ENCODE measurements at regions of chr5 and their contacts with region 1.

Region 1: DNA sequence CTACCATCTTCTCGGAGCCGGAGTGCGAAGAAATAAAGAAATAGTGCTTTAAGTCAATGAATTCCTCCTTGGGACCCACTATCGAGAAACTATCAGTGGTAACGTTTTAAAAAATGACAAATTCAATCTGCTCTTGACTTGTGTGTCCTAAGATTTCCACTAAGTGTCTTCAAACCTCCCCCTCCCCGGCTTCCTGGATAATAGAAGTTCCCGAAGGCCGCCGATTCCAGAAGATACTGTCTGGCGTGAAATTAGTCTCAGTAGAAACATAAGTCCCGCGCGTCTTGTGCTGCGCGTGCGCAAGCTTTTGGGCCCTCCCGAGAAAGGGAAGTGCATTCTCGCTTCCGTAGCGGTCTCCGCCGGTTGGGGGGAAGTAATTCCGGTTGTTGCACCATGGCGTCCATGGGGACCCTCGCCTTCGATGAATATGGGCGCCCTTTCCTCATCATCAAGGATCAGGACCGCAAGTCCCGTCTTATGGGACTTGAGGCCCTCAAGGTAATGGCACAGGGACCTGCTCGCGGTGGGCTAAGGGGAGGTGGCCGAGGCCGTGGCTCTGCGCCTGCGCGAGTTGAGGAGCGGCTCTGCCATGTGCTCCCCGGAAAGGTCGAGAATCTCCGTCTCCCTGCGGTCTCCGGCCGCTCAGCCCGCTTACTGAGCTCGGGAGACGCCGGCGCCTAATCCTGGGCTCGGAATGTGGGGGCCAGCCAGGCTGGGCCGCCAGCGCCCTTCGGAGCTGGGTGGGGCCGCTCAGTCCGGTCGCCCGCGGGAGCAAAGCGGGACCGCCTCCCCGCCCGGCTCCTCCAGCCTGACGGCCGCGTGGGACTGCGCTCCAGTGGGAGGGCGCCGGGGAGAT is at the start of gene CCT5:
- DNase-seq: peak; percentile 94
- ATAC-seq: peak; percentile 82
- H3K4me3 Mint-ChIP-seq: peak within 1 kb of the TSS; percentile 84
- H3K27ac Mint-ChIP-seq: peak within 1 kb of the TSS; percentile 99
- H3K4me1 Mint-ChIP-seq: peaks cover 51% of the 10 kb centered on the region
- H3K27me3 Mint-ChIP-seq: no peaks in the 10 kb centered on the region
- total RNA-seq, gene CCT5: 319 to 322 TPM

Region 2: GRCh38 chr5:10030210-10030831 is 219.9 kb before region 1 on chr5:
- CTCF ChIA-PET with region 1: no interaction called
- POLR2A ChIA-PET with region 1: no interaction called
- DNase-seq: no peak
- ATAC-seq: no peak
- H3K4me3 Mint-ChIP-seq: no peak overlapping the region
- H3K27ac Mint-ChIP-seq: no peak overlapping the region
- H3K4me1 Mint-ChIP-seq: no peaks in the 10 kb centered on the region
- H3K27me3 Mint-ChIP-seq: no peaks in the 10 kb centered on the region

Region 3: GRCh38 chr5:10158886-10159285 is 91.3 kb before region 1 on chr5:
- CTCF ChIA-PET with region 1: no interaction called
- POLR2A ChIA-PET with region 1: no interaction called
- DNase-seq: no peak
- ATAC-seq: no peak
- H3K4me3 Mint-ChIP-seq: no peak overlapping the region
- H3K27ac Mint-ChIP-seq: no peak overlapping the region
- H3K4me1 Mint-ChIP-seq: no peaks in the 10 kb centered on the region
- H3K27me3 Mint-ChIP-seq: no peaks in the 10 kb centered on the region

Region 4: DNA sequence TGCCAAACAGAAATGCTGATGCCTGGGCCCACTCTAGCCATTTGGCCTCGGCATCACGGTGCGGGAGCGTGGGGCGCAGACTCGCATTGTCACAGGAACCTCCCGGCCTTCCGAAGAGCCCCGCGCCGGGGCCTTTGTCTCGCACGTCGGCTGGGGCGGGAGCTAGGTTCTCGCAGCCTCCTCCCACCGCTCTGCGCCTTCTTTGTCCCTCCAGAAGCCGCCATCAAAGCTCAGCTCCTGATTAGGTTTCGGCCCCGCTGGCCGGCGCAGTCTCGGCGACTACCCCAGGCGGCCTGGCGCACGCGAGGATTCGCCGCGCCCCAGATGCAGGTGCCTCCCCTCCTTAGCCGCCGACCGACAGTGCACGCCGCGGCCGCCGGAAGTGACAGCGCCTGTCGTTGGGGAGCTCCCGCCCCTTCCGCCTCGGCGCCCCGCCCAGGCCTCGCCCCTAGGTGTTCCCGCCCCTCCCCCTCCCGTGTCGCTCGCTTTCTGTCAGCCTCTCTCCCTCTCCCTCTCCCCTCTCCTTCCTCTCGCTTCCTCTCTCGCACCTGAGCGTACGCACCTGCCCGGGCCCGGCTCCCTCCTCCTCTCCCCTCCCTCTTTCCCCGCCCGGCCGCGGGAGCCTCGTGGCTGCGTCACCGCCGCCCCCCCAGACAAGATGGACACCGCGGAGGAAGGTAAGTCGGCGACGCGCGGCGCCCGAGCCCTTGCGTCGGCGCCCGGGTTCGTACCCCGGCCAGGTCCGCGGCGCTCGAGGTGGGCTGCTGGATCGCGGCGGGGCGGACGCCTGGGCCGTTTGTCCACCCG is 103.3 kb after region 1 on chr5 and contains the start of gene MARCHF6:
- CTCF ChIA-PET with region 1: interaction called, 3 read pairs
- POLR2A ChIA-PET with region 1: interaction called, 17 read pairs
- DNase-seq: peak; percentile 96
- ATAC-seq: peak; percentile 92
- H3K4me3 Mint-ChIP-seq: peak within 1 kb of the TSS; percentile 99
- H3K27ac Mint-ChIP-seq: peak within 1 kb of the TSS; percentile 99
- H3K4me1 Mint-ChIP-seq: peaks cover 29% of the 10 kb centered on the region
- H3K27me3 Mint-ChIP-seq: no peaks in the 10 kb centered on the region
- total RNA-seq, gene MARCHF6: 72.2 to 80.5 TPM

Measured in activated CD8-positive, alpha-beta T cell treated with anti-CD3 and anti-CD28 coated beads, Interleukin-2, amount 10 ng/mL, durations not matched to agents 7 days and 5 days (primary cell).